Head of caudate nucleus (tissue), 42 donors: ENCODE measurements at regions of chr22 and their contacts with region 1.

Region 1: GRCh38 chr22:43993027-43993760 is 30.9 kb upstream of the PARVB start:
- DNase-seq: peak in 41 of 42 donors; percentile 28 to 81 (median 58)

Region 2: DNA sequence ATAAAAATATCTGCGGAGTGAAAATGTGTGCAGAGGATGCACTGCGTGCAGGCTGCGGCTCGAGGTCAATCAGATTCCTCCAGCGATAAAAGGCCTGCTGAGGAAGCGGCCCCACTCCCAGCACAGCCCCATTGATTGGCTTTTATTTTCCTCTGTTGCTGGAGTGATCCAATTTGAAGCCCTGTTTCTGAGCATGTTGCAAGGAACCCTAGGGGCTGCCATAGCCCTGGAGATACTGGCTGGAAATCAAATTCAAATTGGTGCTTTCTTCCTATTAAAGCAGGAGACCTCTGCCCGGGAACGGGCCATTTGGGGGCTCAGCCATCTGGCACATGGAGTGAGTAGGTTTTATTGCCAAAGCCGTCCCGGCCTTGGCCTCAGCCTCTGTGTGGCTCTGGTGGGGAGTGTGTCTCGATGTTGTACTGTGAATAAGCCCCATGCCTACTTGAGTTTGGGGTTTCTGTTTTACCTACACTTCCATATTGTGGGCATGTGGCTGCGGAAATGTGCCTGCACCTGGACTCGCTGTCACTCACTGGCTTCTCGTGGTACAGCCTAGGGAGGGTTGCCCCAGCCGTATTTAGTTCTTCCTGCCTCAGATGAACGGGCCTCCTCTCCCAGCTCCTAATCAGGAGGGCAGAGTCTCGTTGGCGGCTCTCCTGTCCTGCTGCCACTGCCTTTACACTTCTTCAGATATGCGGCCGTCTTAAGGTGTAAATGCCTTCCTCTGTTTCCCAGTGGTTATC is 56.5 kb after region 1 on chr22:
- intact Hi-C with region 1: no loop called
- DNase-seq: peak in 18 of 42 donors; percentile 24 to 73 (median 54)

Region 3: GRCh38 chr22:44074337-44074984 is 81.3 kb after region 1 on chr22:
- intact Hi-C with region 1: loop called (anchors 10 kb)
- DNase-seq: peak; percentile 38 to 96 (median 76)

Region 4: DNA sequence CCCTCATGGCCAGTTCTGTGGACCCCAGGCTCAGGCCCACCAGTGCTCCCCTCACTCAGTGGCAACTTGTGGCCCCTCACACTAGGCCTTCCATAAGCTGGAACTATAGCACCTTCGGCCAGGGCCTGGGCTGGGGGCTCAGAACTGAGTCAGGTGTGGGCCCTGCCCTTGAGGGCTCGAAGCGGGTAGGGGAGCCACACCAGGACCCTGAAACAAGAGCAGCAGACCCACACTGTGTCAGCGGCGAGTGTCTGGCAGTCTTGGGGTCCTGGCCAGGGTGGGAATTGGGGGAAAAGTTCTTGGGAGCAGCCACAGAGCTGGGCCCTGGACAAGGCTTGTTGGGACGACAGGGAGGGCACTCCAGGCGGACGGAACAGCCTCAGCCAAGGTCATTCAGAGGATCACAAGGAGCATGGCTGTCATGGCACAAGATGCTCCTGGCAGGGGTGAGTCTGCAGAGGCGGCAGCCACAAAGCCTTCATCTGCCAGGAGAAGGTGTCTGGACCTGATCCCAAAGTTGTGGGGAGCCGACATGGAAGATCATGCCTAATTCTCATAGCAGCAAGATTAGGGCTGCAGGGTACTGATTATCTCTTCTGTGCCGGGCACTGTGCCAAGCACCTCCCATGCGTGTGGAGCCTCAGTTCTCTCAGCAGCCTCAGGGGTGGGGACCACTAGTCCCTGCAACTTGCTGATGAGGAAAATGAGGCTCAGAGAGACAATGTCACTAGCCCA is 268.8 kb after region 1 on chr22:
- intact Hi-C with region 1: no loop called
- DNase-seq: peak in 40 of 42 donors; percentile 11 to 78 (median 48)

Region 5: DNA sequence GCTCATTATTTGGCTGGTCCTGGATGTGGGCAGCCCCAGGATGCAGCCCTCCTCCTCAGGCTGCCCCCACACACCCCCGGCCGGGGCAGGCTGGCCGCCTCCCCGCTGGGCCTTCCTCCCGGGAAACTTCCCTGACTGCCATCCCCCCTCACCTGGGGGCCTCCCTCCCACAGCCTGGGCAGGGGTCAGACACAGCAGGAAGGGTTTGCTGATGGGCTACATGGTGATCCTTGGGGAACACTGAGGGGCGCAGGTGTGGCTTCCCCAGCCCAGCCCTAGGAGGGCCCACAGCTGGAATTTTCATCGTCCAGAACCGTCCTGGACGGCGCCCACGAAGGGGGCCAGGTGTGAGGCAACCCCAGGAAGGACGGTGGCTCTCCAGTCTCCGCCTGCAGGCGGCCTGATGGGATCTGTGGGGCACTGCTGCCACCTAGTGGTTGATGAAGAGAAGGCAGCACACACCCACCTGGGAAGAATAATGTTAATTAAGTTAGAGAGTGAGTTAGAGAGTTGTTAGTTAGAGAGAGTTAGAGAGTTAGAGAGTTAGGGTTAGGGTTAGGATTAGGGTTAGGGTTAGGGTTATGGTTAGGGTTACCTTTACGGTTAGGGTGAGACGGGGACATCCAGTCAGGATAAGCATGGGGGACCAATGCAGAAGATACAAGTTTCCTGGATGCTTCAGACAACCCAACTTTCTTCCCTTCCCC is 632.9 kb after region 1 on chr22:
- intact Hi-C with region 1: loop called (anchors 5 kb)
- DNase-seq: peak; percentile 44 to 89 (median 76)